T-cell (primary cell): ENCODE measurements at regions of chr2 and their contacts with region 1.

Region 1: DNA sequence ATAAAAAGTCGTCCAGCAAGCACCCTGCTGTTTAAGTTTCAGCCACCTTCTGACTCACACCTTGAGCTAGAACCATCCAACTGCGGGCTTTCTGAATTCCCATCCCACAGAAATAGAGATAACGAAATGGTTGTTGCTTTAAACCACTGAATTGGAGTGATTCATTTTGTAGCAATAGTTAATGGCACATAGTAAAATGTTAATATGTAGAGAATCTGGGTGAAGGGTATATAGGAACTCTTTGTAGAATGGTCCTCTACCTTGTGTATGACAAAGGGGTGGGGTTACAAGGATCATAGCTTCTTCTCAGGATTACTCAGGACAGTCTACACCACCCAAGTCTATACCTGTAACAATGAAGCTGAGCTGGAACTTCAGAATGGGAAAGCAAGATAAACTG is 2.4 kb upstream of the MAPRE3 start:
- DNase-seq: no peak
- ATAC-seq: no peak
- H3K4me3 ChIP-seq: no peak overlapping the region
- H3K4me3 Mint-ChIP-seq: no peak overlapping the region
- H3K27ac ChIP-seq: no peak overlapping the region
- H3K27ac Mint-ChIP-seq: no peak overlapping the region
- H3K4me1 ChIP-seq: peaks cover 0 to 16% of the 10 kb centered on the region in 2 experiments
- H3K4me1 Mint-ChIP-seq: peaks cover 20 to 30% (median 23%) of the 10 kb centered on the region in 3 donors
- H3K27me3 ChIP-seq: peaks cover 0 to 24% of the 10 kb centered on the region in 2 experiments
- H3K27me3 Mint-ChIP-seq: peaks cover 23 to 26% of the 10 kb centered on the region in 2 donors

Region 2: GRCh38 chr2:27016801-27017325 is 48.9 kb after region 1 on chr2:
- CTCF ChIA-PET with region 1: interaction called, 15 to 28 read pairs
- POLR2A ChIA-PET with region 1: no interaction called
- DNase-seq: peak in 26 of 35 experiments; percentile 10 to 64 (median 31)
- ATAC-seq: peak in 2 of 4 experiments; percentile 37 to 51
- H3K4me3 ChIP-seq: no peak overlapping the region
- H3K4me3 Mint-ChIP-seq: no peak overlapping the region
- H3K27ac ChIP-seq: no peak overlapping the region
- H3K27ac Mint-ChIP-seq: no peak overlapping the region
- H3K4me1 ChIP-seq: no peaks in the 10 kb centered on the region
- H3K4me1 Mint-ChIP-seq: no peaks in the 10 kb centered on the region
- H3K27me3 ChIP-seq: peaks cover 0 to 4% of the 10 kb centered on the region in 2 experiments
- H3K27me3 Mint-ChIP-seq: peaks cover 0 to 6% of the 10 kb centered on the region in 2 donors

Region 3: DNA sequence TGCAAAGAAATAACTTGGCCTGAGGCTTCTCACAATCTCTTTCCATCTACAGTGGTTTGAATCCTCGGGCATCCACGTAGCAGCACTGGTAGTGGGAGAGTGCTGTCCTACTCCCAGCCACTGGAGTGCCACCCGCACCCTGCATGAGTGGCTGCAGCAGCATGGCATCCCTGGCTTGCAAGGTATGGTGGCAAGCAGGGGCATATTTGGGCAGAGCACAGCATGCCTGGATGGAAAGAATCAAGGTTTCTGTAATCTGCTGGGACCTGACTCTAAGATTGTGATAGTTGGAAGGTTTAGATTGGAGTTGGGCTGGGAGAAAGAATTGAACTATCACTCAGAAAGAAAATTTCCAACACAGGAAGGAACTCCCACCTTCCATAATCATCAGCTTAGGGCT is 253.2 kb after region 1 on chr2:
- CTCF ChIA-PET with region 1: no interaction called
- POLR2A ChIA-PET with region 1: no interaction called
- DNase-seq: no peak
- ATAC-seq: no peak
- H3K4me3 ChIP-seq: no peak overlapping the region
- H3K4me3 Mint-ChIP-seq: no peak overlapping the region
- H3K27ac ChIP-seq: no peak overlapping the region
- H3K27ac Mint-ChIP-seq: no peak overlapping the region
- H3K4me1 ChIP-seq: peaks cover 6 to 16% of the 10 kb centered on the region in 2 experiments
- H3K4me1 Mint-ChIP-seq: peaks cover 27 to 33% (median 32%) of the 10 kb centered on the region in 3 donors
- H3K27me3 ChIP-seq: no peaks in the 10 kb centered on the region
- H3K27me3 Mint-ChIP-seq: no peaks in the 10 kb centered on the region

Region 4: DNA sequence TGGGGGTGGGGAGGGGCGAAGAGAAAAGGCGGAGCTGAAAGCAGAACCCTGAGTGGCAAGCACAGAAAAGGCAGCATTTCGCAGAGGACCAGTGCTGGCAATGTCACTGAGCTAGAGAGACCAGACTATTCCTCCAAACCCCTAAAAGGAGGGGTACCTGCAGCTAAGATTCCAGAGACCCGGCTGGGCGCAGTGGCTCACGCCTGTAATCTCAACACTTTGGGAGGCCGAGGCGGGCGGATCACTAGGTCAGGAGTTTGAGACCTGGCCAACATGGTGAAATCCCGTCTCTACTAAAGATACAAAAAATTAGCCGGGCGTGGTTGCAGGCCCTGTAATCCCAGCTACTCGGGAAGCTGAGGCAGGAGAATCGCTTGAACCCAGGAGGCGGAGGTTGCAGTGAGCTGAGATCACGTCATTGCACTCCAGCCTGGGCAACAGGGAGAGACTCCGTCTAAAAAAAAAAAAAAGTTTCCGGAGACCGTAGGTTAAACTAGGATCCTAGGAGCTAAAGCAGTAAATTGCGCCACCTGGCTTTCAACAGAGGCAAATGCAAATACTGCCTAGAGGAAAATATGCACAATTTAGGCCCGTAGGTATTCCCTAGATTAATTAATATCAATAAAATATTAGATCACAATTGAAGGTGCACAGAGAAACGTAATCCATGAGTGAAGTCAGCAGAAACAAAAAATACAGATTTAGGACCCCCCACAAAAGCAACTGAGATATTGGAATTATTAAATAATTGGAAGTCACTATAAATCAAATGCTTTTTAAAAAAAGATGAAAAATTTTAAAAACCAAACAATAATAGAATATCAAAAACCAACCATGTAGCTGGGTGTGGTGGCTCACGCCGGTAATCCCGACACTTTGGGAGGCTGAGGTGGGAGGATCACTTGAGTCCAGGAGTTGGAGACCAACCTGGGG is 335.4 kb after region 1 on chr2:
- CTCF ChIA-PET with region 1: interaction called in 1 of 2 experiments, 12 read pairs
- POLR2A ChIA-PET with region 1: no interaction called
- DNase-seq: peak in 25 of 35 experiments; percentile 13 to 73 (median 28)
- ATAC-seq: peak; percentile 56 to 76 (median 60)
- H3K4me3 ChIP-seq: peak overlapping the region; percentile 33 to 46
- H3K4me3 Mint-ChIP-seq: peak overlapping the region; percentile 64 to 72 (median 68)
- H3K27ac ChIP-seq: no peak overlapping the region
- H3K27ac Mint-ChIP-seq: peak overlapping the region in 1 of 2 donors; percentile 71
- H3K4me1 ChIP-seq: peaks cover 0 to 22% of the 10 kb centered on the region in 2 experiments
- H3K4me1 Mint-ChIP-seq: peaks cover 6 to 13% (median 6%) of the 10 kb centered on the region in 3 donors
- H3K27me3 ChIP-seq: peaks cover 2 to 42% of the 10 kb centered on the region in 2 experiments
- H3K27me3 Mint-ChIP-seq: peaks cover 18 to 35% of the 10 kb centered on the region in 2 donors